ENCODE measurements at regions of chr4 and their contacts with region 1.

Region 1: DNA sequence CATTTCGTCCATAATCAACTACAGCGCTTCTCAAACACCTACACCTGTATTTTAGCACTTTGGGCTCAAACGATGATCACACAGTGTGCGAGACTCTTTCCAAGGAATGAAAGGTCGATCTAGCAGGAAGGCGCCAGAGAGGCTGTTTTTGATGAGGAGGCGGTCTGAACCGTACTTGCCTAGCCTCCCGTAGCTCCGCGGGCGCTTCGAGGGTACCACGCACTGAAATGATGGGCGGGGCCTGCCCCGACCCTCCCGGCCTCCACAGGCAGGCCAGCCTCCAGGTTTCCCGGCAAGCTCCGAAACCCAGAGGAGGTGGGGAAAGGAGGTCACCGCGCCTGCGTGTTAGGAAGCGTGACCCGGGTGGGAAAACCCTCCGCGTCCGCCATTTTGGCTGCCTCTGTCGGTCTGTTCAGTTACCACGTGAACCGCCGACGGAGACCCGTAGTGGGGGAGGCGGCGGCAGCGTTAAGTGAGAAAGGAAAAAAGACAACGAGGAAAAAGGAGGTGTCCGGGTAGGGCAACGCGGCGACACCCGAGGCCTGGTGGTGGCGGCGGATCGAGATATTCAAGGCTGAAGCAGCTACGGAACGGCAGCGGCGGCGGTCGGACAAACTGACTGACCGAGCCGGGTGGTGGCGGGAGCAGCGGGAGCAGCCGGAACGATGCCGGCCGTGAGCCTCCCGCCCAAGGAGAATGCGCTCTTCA is at the start of gene NAA15:
- DNase-seq: peak; percentile 99
- H3K4me3 ChIP-seq: peak within 1 kb of the TSS; percentile 84
- H3K27ac ChIP-seq: peak within 1 kb of the TSS; percentile 89
- H3K4me1 ChIP-seq: peaks cover 38% of the 10 kb centered on the region
- CTCF ChIP-seq: no peak
- total RNA-seq, gene NAA15: 45.3 and 50.1 TPM in 2 replicates

Region 2: GRCh38 chr4:139083956-139084803 is 217.1 kb before region 1 on chr4:
- CTCF ChIA-PET with region 1: no interaction called
- POLR2A ChIA-PET with region 1: interaction called, 3 read pairs
- intact Hi-C with region 1: loop called (anchors 2 kb)
- DNase-seq: peak; percentile 93
- H3K4me3 ChIP-seq: peak overlapping the region; percentile 91
- H3K27ac ChIP-seq: peak overlapping the region; percentile 95
- H3K4me1 ChIP-seq: peaks cover 22% of the 10 kb centered on the region
- CTCF ChIP-seq: peak; percentile 46

Region 3: GRCh38 chr4:139177868-139178611 is 123.2 kb before region 1 on chr4:
- CTCF ChIA-PET with region 1: interaction called, 4 read pairs
- POLR2A ChIA-PET with region 1: interaction called, 8 read pairs
- intact Hi-C with region 1: loop called (anchors 2 kb)
- DNase-seq: peak; percentile 95
- H3K4me3 ChIP-seq: peak overlapping the region; percentile 83
- H3K27ac ChIP-seq: peak overlapping the region; percentile 89
- H3K4me1 ChIP-seq: peaks cover 25% of the 10 kb centered on the region
- CTCF ChIP-seq: no peak

Region 4: GRCh38 chr4:139214039-139214534 is 87.2 kb before region 1 on chr4:
- CTCF ChIA-PET with region 1: interaction called, 3 read pairs
- POLR2A ChIA-PET with region 1: interaction called, 10 read pairs
- intact Hi-C with region 1: no loop called
- DNase-seq: peak; percentile 94
- H3K4me3 ChIP-seq: peak overlapping the region; percentile 11
- H3K27ac ChIP-seq: peak overlapping the region; percentile 82
- H3K4me1 ChIP-seq: peaks cover 37% of the 10 kb centered on the region
- CTCF ChIP-seq: no peak

Region 5: DNA sequence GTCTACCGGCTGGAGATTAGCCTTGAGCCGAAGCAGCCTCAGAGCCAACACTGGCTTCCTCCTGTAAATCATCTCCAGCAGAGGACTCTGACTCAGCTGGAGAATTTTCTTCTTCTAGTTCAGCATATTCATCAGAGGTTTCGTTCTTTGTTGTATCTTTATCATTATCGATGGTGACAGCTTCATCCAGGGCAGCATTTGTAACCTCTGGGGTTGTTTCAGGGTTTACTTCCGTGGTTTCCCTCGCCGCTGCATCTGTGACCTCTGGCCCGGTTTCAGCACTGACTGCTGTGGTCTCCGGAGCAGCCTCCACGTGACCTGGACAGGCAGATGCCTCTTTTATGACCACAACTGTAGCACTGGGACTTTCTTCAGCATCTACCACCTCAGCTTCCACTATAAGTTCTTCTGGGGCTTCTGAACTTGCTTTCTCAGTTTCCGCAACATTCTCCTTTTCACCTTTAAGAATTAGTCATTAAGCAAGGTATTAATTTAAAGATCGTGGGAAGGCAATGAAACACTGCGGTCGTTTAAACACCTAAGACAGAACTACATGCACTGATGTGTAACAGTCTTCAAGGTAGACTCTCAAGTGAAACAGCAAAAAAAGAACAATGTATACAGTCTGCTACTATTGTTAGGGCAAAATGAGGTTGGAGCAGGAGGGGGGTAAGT is 34.5 kb before region 1 on chr4:
- CTCF ChIA-PET with region 1: interaction called, 3 read pairs
- POLR2A ChIA-PET with region 1: interaction called, 15 read pairs
- intact Hi-C with region 1: no loop called
- DNase-seq: peak; percentile 86
- H3K4me3 ChIP-seq: peak overlapping the region; percentile 68
- H3K27ac ChIP-seq: peak overlapping the region; percentile 78
- H3K4me1 ChIP-seq: peaks cover 39% of the 10 kb centered on the region
- CTCF ChIP-seq: no peak

Region 6: GRCh38 chr4:139315221-139315675 is 14.0 kb after region 1 on chr4:
- CTCF ChIA-PET with region 1: interaction called, 4 read pairs
- POLR2A ChIA-PET with region 1: interaction called, 15 read pairs
- intact Hi-C with region 1: loop called (anchors 1 kb)
- DNase-seq: peak; percentile 65
- H3K4me3 ChIP-seq: peak overlapping the region; percentile 54
- H3K27ac ChIP-seq: peak overlapping the region; percentile 79
- H3K4me1 ChIP-seq: peaks cover 67% of the 10 kb centered on the region
- CTCF ChIP-seq: no peak

Region 7: GRCh38 chr4:139337612-139338011 is 36.3 kb after region 1 on chr4:
- CTCF ChIA-PET with region 1: no interaction called
- POLR2A ChIA-PET with region 1: interaction called, 4 read pairs
- intact Hi-C with region 1: loop called (anchors 2 kb)
- DNase-seq: no peak
- H3K4me3 ChIP-seq: no peak overlapping the region
- H3K27ac ChIP-seq: no peak overlapping the region
- H3K4me1 ChIP-seq: peaks cover 34% of the 10 kb centered on the region
- CTCF ChIP-seq: no peak

Measured in OCI-LY7 (cell line).